ENCODE measurements at regions of chr20 and their contacts with region 1.

Region 1: GRCh38 chr20:58850693-58851174 is at the start of gene GNAS-AS1:
- DNase-seq: no peak
- H3K4me3 ChIP-seq: no peak within 1 kb of the TSS
- H3K4me1 ChIP-seq: no peaks in the 10 kb centered on the region
- H3K27me3 ChIP-seq: peaks cover 16% of the 10 kb centered on the region; the same call in 1 of the 2 replicates

Region 2: GRCh38 chr20:59222253-59223181 is 371.8 kb after region 1 on chr20:
- in situ Hi-C with region 1: loop called (anchors 25 kb)
- DNase-seq: peak; percentile 74 to 90
- H3K4me3 ChIP-seq: peak overlapping the region; percentile 19
- H3K4me1 ChIP-seq: no peaks in the 10 kb centered on the region; the same call in 1 of the 2 replicates
- H3K27me3 ChIP-seq: peaks cover 6% of the 10 kb centered on the region

Region 3: DNA sequence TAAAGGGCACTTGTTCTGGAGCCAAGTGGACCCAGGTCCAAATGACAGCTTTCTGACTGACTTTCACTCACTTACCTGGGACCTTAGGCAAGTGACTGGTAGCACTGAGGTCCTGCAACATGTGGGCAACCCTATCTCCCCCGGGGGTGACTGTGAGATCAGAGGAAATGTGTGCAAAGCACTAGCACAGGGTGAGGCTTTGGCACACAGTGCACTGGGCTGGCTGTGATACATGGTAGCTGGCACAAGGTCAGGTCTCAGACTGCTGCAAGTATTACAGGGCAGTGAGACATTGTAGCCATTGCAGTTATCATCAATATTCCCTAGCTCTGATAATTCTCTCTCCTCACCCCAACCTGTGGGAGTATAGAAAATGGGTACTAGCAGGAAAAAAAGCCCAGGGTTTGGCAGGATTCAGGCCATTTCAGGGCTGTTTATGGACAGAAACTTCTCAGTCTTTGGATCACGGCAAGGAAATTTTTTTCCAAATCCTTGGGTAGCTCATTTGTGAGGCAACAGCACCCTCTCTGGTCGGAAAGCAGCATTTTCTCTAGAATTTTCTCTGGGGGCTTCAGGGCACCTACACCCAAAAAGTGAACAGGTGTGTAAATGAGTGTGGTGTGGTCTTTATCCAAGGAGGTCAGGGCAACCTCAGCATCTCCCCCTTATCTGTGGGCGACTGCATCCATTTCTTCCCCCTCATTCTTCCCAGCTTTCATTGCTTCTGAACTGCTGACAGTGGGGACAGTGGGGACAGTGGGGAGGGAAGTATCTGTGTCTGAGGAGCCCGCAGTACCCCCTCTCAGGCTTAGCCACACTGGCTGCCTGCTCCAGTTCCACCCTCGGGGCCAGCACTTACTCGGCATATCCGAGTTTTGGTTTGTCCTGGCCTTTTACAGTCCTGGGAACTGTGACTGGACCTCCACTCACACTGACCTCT is 604.9 kb after region 1 on chr20:
- in situ Hi-C with region 1: loop called (anchors 25 kb)
- DNase-seq: peak in 1 of 2 experiments; percentile 31
- H3K4me3 ChIP-seq: no peak overlapping the region
- H3K4me1 ChIP-seq: no peaks in the 10 kb centered on the region
- H3K27me3 ChIP-seq: no peaks in the 10 kb centered on the region

Measured in HAP-1 (cell line).